ENCODE measurements at regions of chr14 and their contacts with region 1.

Region 1: GRCh38 chr14:104752735-104753531 is at the start of gene SIVA1:
- DNase-seq: peak; percentile 100
- H3K4me3 ChIP-seq: peak within 1 kb of the TSS; percentile 22 to 96 (median 56)
- H3K27ac ChIP-seq: peak within 1 kb of the TSS; percentile 39
- H3K4me1 ChIP-seq: peaks cover 8% of the 10 kb centered on the region
- H3K27me3 ChIP-seq: no peaks in the 10 kb centered on the region
- CTCF ChIP-seq: no peak
- POLR2A ChIP-seq: peak; percentile 79
- total RNA-seq, gene SIVA1: 92.7 and 101 TPM in 2 replicates

Region 2: DNA sequence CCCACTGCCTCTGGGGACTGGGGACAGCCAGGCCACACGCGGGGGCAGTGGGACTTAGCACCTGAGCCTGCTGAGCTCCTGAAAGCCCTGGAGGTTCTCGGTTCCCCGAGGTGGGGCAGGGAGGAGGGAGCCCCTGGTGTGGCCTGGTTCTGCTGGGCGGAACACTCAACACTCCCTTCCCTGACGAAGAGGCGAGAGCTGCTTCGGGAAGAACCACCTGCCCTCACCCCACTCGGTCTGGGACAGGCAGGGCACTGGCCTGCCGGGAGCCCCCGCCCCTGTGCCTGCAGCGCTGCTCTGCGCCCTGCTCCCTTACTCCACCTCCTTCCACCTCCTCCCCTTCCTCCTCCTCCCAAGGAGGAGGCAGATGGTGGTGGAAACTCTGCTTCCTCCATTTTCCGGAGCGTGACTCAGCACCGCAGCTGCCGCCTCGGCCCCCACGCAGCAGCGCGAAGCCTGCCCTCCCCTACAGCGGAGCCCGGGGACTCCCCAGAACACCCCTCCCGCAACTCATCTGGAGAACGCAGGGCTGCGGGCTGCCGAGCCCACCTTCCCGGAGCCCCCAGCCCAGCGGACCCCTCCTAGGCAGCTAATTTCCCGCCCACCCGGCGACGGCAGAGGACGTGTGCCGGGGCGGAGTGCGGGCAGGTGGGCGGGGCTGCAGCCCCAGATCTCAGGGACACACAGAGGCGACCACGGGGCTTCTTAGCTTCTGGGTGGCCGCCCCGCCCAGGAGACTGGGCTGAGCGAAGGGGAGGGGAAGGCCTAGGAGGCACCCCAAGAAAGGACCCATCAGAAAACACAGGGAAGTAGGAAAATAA is 75.2 kb before region 1 on chr14:
- CTCF ChIA-PET with region 1: interaction called, 3 read pairs
- POLR2A ChIA-PET with region 1: interaction called, 4 read pairs
- dilution Hi-C with region 1: no loop called
- intact Hi-C with region 1: loop called (anchors 1 kb)
- DNase-seq: peak; percentile 92
- H3K4me3 ChIP-seq: peak overlapping the region in 2 of 3 experiments; percentile 19 to 38
- H3K27ac ChIP-seq: peak overlapping the region; percentile 95
- H3K4me1 ChIP-seq: peaks cover 40% of the 10 kb centered on the region
- H3K27me3 ChIP-seq: no peaks in the 10 kb centered on the region
- CTCF ChIP-seq: no peak
- POLR2A ChIP-seq: peak; percentile 71

Region 3: DNA sequence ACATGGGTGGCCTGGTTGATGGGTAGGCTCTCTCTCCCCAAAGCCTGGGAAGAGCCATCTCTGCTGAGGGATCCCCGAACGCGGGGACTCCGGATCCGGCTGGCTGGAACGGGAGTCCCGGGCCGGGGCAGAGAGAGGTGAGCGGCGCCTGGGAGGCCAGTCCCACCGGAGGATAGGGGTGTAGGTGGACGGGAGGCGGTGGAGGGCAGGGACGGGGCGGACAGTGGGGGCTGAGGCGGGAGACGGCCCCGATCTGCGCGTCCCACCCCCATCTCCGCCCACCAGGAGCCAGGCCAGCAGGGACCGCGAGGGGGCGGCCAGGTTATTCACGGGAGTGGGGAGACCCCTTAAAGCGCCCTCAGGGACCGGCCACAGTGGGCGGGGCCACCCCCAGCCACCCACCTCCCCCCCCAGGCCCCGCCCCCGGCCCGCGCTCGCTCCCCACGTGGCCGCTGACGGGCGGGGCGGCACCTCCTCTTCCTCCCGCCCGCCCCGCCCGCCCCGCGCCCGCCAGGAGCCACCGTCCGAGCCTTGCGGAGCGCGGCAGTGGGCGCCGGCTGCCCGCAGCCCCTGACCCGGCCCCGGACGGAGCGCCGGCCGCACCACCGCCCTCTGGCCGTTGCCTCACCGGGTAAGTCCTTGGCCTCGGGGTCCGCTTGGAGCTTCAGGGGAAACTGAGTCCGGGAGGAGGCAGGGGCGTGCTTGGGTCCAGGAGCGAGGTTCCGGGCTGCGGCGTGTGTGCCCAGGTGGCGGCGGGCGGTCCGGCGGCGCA is 63.6 kb before region 1 on chr14 and contains the start of gene INF2:
- CTCF ChIA-PET with region 1: no interaction called
- POLR2A ChIA-PET with region 1: no interaction called
- dilution Hi-C with region 1: no loop called
- intact Hi-C with region 1: loop called (anchors 2 kb)
- DNase-seq: peak; percentile 35
- H3K4me3 ChIP-seq: peak within 1 kb of the TSS; percentile 69 to 92 (median 87)
- H3K27ac ChIP-seq: peak within 1 kb of the TSS; percentile 50
- H3K4me1 ChIP-seq: peaks cover 28% of the 10 kb centered on the region
- H3K27me3 ChIP-seq: no peaks in the 10 kb centered on the region
- CTCF ChIP-seq: no peak
- POLR2A ChIP-seq: peak; percentile 76
- total RNA-seq, gene INF2: 117 and 124 TPM in 2 replicates

Region 4: DNA sequence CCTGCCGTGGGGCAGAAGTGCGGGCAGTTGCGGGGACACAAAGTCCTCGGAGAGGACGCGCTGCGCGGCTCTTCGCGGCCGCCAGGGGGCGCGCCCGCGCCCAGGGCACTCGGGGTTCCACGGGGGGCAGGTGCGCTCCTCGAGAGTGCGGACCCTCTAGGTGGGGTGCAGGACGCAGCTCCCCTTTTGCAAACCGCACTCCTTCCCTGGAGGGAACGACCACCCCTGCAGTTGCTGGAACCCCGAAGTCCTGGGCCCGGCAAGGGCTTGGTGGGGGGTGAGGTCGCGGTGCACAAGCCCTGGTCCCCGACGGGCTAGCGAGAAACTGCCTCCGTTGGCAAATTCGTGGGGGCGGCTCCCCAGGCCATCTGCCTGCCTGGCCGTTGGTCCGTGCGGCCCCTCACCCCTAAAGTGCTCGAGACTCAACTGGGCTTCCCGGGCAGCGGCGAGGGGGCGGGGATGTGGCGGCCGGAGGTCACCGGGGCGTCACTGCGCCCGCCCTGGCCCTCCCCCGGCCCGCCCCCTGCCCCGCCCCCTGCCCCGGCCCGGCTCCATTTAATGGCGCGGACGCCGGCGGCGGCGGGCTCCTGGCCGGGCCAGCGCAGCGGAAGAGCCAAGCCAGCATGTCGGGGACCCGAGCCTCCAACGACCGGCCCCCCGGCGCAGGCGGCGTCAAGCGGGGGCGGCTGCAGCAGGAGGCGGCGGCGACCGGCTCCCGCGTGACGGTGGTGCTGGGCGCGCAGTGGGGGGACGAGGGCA is 29.1 kb before region 1 on chr14 and contains the start of gene ADSS1:
- CTCF ChIA-PET with region 1: interaction called, 17 read pairs
- POLR2A ChIA-PET with region 1: no interaction called
- dilution Hi-C with region 1: no loop called
- intact Hi-C with region 1: loop called (anchors 2 kb)
- DNase-seq: peak; percentile 46
- H3K4me3 ChIP-seq: peak within 1 kb of the TSS; percentile 7 to 52 (median 35)
- H3K27ac ChIP-seq: no peak within 1 kb of the TSS
- H3K4me1 ChIP-seq: peaks cover 5% of the 10 kb centered on the region
- H3K27me3 ChIP-seq: no peaks in the 10 kb centered on the region
- CTCF ChIP-seq: peak; percentile 93 to 97
- POLR2A ChIP-seq: peak; percentile 67
- total RNA-seq, gene ADSS1: 1.9 and 2.7 TPM in 2 replicates

Region 5: GRCh38 chr14:104735830-104736642 is 16.9 kb before region 1 on chr14:
- CTCF ChIA-PET with region 1: interaction called, 11 read pairs
- POLR2A ChIA-PET with region 1: interaction called, 6 read pairs
- dilution Hi-C with region 1: no loop called
- intact Hi-C with region 1: loop called (anchors 1 kb)
- DNase-seq: peak; percentile 87
- H3K4me3 ChIP-seq: no peak overlapping the region
- H3K27ac ChIP-seq: peak overlapping the region; percentile 64
- H3K4me1 ChIP-seq: peaks cover 19% of the 10 kb centered on the region
- H3K27me3 ChIP-seq: no peaks in the 10 kb centered on the region
- CTCF ChIP-seq: no peak
- POLR2A ChIP-seq: peak; percentile 56

Region 6: DNA sequence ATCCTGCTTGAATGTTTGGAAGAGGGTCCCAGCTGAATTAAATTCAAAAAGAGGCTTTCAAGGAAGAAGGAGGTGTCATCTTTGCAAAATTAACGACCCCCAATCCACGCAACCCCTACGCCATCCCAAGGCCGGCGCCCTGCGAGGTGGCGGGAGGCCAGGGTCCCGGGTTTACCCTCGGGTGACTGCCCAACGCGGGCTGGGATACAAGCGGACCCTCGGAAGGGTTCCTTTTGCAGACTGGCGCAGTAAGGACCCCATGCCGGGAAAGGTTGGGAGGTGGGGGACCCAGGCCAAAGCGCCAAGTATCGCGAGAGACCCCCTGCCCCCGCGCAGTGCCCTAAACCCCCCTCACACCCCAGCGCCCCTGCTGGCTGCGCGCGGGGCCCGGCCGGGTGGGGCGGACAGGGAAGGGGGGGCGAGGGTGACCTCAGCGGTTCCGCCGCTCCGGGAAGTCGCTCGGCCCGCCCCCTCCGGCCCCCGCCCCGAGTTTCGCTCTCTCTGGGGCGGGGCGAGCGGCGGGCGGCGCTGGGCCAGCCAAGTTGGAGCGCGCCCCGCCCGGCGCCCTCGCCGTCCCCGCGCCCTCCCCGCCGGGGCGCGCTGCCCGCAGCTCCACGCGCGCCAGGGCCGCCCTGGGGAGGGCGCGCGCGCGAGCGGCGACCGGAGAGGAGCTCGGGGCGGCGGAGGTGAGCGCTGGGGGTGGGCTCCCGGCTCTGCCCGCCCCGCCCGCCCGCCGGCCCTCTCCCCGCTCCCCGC is 47.3 kb after region 1 on chr14:
- CTCF ChIA-PET with region 1: interaction called, 4 read pairs
- POLR2A ChIA-PET with region 1: no interaction called
- dilution Hi-C with region 1: no loop called
- intact Hi-C with region 1: loop called (anchors 2 kb)
- DNase-seq: peak; percentile 62
- H3K4me3 ChIP-seq: peak overlapping the region in 1 of 3 experiments; percentile 71
- H3K27ac ChIP-seq: no peak overlapping the region
- H3K4me1 ChIP-seq: peaks cover 7% of the 10 kb centered on the region
- H3K27me3 ChIP-seq: no peaks in the 10 kb centered on the region
- CTCF ChIP-seq: peak; percentile 10 to 51
- POLR2A ChIP-seq: no peak

Region 7: DNA sequence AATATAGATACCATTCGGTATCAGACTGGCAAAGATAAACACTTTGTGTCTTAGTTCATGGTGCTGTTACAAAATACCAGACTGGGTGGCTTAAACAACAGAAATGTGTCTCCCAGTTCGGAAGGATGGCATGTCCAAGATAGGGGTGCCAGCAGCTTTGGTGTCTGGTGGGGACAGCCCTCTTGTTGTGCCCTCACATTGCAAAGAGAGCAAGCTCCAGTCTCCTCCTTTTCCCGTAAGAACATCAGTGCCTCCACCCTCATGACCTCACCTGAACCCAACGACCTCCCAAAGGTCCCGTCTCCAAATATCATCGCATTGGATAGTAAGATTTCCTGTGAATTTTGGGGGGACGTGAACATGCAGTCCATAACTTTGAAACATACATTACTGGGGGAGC is 60.4 kb after region 1 on chr14:
- CTCF ChIA-PET with region 1: no interaction called
- POLR2A ChIA-PET with region 1: no interaction called
- dilution Hi-C with region 1: no loop called
- intact Hi-C with region 1: no loop called
- DNase-seq: no peak
- H3K4me3 ChIP-seq: no peak overlapping the region
- H3K27ac ChIP-seq: no peak overlapping the region
- H3K4me1 ChIP-seq: peaks cover 15% of the 10 kb centered on the region
- H3K27me3 ChIP-seq: no peaks in the 10 kb centered on the region
- CTCF ChIP-seq: no peak
- POLR2A ChIP-seq: no peak

Region 8: DNA sequence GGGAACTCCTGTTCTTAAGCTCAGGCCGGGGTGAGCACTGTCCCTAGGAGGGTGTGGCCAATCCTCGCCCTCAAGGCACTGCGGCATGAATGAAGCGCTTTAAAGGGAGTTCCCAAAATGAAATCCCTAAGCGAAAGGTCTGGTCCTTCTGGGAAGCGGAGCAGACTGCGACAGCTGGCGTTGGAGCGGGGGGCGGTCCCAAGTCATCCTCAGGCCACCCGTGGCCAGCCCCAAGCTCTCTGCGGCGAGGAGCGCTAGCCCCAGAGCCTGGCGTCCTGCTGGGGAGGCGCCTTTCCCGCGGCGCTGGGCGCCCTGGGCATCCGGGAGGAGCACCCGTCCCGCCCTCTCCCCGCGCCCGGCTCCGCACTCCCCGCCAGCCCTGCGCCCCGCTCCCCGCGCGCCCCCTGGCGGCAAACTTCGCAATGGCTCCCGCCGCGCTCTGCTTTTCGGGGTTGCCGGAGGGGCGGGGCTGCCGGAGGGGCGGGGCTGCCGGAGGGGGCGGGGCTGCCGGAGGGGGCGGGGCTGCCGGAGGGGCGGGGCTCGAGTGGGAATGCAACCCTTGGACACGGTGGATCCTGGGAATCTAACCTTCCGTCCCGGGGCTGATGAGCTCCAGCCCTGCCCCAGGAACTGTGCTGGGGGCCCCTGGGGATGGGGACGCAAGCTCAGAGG is 73.4 kb after region 1 on chr14:
- CTCF ChIA-PET with region 1: interaction called, 13 read pairs
- POLR2A ChIA-PET with region 1: no interaction called
- dilution Hi-C with region 1: no loop called
- intact Hi-C with region 1: loop called (anchors 5 kb)
- DNase-seq: peak; percentile 69
- H3K4me3 ChIP-seq: peak overlapping the region; percentile 53 to 82 (median 64)
- H3K27ac ChIP-seq: no peak overlapping the region
- H3K4me1 ChIP-seq: peaks cover 10% of the 10 kb centered on the region
- H3K27me3 ChIP-seq: no peaks in the 10 kb centered on the region
- CTCF ChIP-seq: peak; percentile 40 to 59
- POLR2A ChIP-seq: no peak